Calu3 (cell line): ENCODE measurements at regions of chr14 and their contacts with region 1.

Region 1: DNA sequence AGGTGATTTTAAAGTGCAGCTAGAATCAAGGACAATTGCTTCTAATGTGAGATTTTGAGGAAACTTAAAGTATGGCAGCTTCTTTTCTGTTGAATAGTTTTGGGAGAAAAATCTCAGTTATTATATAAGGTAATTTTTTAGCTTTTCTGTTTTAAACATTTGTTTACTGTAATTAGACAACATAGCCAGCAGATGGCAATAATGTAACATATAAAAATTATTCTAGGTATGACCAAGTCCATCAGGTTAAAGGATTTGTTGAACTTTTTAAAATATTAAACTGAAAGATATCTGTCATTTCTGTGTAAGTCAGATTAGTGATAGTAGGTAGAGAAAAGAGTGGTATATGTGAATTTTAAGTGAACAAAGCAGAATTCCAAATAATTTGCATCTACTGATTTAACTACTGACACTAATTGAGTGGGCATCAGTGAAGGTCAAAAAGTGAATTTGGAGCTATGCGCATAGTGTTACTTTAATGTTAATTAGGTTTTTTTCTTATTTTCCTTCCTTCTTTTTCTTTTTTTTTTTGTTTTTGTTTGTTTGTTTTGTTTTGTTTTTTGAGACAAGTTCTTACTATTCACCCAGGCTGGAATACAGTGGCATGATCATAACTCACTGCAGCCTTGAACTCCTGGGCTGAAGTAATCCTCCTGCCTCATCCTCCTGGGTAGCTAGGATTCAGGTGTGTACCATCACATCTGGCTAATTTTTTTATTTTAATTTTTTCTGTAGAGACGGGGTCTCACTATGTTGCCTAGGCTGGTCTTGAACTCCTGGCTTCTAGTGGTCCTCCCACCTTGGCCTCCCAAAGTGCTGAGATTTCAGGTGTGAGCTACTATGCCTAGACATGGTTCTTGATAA is 18.6 kb downstream of the PRORP start:
- DNase-seq: no peak
- H3K4me3 Mint-ChIP-seq: no peak overlapping the region
- H3K27ac Mint-ChIP-seq: no peak overlapping the region
- H3K4me1 Mint-ChIP-seq: no peaks in the 10 kb centered on the region
- H3K27me3 Mint-ChIP-seq: no peaks in the 10 kb centered on the region
- CTCF ChIP-seq: no peak

Region 2: DNA sequence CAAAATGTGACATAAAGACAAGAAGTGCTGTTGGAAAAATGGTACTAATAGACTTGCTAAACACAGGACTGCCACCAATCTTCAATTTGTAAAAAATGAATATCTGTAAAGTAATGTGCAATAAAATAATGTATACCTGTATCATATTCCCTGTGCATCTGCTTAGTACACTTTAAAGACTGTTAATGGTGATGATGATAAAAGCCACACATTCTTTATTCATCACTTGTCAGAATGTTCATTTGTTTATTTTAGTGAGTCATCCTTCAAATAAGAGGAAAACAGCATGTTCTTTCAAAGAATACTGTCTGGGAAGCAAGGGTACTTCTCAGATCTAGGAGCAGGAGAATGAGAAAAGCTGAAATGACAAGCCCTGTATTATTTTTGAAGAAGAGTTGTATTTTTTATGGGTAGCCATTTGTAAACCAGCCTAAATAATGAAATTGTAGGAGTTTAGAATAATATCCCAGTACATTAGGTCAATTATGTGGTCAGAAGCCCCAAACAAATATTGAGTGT is 73.0 kb after region 1 on chr14:
- CTCF ChIA-PET with region 1: interaction called, 4 read pairs
- intact Hi-C with region 1: loop called (anchors 5 kb)
- DNase-seq: no peak
- H3K4me3 Mint-ChIP-seq: no peak overlapping the region
- H3K27ac Mint-ChIP-seq: no peak overlapping the region
- H3K4me1 Mint-ChIP-seq: peaks cover 12% of the 10 kb centered on the region
- H3K27me3 Mint-ChIP-seq: no peaks in the 10 kb centered on the region
- CTCF ChIP-seq: no peak

Region 3: DNA sequence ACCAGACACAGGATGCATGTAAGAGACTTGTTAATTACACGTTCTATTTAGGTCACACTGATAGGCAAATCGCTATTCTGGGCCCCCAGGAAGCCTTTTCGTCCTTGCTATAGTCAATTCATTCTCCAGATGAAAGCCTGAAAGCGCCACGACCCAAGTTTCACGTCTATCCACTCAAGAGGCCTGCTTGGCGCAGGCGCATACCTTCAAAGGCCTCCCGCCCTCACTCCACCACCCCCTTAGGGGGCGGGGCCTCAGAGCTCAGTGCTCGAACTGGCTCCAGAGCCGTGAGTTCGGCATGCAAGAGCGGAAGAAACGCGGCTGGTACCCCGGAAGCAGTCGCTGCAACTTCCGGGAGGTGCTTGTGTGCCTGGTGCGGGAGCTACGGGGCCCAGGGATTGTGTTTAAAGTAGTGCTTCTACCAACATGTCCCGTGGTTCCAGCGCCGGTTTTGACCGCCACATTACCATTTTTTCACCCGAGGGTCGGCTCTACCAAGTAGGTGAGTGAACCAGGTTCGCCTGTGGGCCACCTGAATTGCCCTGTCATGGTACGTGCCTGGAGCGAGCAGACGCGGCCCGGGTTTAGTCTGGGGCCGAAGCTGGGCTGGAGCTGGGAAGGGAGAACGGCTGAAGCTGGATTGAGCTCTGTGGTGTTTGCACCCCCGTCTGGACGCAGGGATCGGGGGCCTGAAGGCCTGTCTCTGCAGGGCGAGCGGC is 151.3 kb after region 1 on chr14 and contains the start of gene PSMA6:
- CTCF ChIA-PET with region 1: no interaction called
- intact Hi-C with region 1: loop called (anchors 10 kb)
- DNase-seq: peak; percentile 98
- H3K4me3 Mint-ChIP-seq: peak within 1 kb of the TSS; percentile 87
- H3K27ac Mint-ChIP-seq: peak within 1 kb of the TSS; percentile 78
- H3K4me1 Mint-ChIP-seq: peaks cover 24% of the 10 kb centered on the region
- H3K27me3 Mint-ChIP-seq: no peaks in the 10 kb centered on the region
- CTCF ChIP-seq: no peak
- total RNA-seq, gene PSMA6: 297 and 341 TPM in 2 replicates

Region 4: DNA sequence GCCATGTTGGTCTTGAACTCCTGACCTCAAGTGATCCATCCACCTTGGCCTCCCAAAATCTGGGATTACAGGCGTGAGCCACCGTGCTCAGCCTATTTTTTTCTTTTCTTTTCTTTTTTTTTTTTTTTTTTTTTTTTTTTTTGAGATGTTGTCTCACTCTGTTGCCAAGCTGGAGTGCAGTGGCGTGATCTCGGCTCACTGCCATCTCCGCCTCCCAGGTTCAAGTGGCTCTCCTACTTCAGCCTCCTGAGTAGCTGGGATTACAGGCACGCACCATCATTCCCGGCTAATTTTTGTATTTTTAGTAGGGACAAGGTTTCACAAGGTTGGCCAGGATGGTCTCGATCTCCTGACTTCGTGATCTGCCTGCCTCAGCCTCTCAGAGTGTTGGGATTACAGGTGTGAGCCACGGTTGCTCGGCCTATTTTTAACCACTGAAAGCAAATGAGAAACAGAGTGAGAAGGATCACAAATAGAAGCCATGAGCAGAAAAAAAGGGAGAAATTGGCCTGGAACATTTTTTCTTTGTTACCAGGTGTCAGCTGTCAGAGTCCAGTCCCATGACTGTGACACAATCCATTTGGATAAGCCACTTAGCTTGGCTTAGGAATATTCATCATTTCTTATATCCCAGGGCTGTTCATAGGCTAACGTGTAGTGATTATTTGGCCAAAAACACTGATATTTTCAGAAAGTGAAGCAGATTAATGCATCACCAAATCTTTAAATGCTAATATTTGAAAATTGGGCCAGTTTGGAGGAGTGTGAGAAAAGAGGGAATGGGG is 271.5 kb after region 1 on chr14:
- CTCF ChIA-PET with region 1: interaction called, 4 read pairs
- intact Hi-C with region 1: loop called (anchors 1 kb)
- DNase-seq: no peak
- H3K4me3 Mint-ChIP-seq: no peak overlapping the region
- H3K27ac Mint-ChIP-seq: no peak overlapping the region
- H3K4me1 Mint-ChIP-seq: peaks cover 39% of the 10 kb centered on the region
- H3K27me3 Mint-ChIP-seq: no peaks in the 10 kb centered on the region
- CTCF ChIP-seq: no peak

Region 5: GRCh38 chr14:35687335-35687939 is 546.5 kb after region 1 on chr14:
- CTCF ChIA-PET with region 1: no interaction called
- intact Hi-C with region 1: loop called (anchors 1 kb)
- DNase-seq: peak; percentile 27
- H3K4me3 Mint-ChIP-seq: no peak overlapping the region
- H3K27ac Mint-ChIP-seq: no peak overlapping the region
- H3K4me1 Mint-ChIP-seq: no peaks in the 10 kb centered on the region
- H3K27me3 Mint-ChIP-seq: no peaks in the 10 kb centered on the region
- CTCF ChIP-seq: no peak